ENCODE measurements at regions of chr11 and their contacts with region 1.

Region 1: DNA sequence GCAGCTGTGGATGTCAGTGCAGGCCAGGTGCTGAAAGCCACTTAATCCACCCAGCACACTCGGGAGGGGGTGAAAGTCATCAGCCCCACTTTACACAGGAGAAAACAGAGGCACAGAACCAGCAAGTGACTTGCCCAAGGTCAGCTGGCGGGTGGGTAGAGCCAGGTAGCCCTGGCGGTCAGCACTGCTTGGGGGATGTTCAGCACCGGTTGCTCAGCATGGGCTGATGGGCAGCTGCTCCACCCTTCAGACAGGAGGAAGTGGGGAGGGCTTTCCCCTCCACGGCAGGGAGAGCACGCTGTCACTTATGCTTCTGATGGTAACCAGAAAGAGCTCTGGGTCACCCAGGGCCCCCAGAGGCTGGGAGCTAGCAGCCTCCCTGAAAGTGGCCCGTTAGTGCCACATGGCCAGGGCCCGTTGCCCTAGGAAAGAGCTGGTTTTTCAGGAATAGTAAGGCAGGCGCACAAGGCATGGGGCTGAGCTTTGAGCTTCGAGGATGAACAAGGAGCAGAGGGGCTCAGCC is 417.9 kb downstream of the CTTN start:
- DNase-seq: peak; percentile 72
- H3K4me3 ChIP-seq: no peak overlapping the region
- H3K27ac ChIP-seq: no peak overlapping the region
- H3K4me1 ChIP-seq: peaks cover 0 to 2% of the 10 kb centered on the region in 2 experiments; a peak in 1 of 4 replicates
- H3K27me3 ChIP-seq: no peaks in the 10 kb centered on the region
- CTCF ChIP-seq: no peak
- EP300 ChIP-seq: no peak
- RAD21 ChIP-seq: no peak

Region 2: DNA sequence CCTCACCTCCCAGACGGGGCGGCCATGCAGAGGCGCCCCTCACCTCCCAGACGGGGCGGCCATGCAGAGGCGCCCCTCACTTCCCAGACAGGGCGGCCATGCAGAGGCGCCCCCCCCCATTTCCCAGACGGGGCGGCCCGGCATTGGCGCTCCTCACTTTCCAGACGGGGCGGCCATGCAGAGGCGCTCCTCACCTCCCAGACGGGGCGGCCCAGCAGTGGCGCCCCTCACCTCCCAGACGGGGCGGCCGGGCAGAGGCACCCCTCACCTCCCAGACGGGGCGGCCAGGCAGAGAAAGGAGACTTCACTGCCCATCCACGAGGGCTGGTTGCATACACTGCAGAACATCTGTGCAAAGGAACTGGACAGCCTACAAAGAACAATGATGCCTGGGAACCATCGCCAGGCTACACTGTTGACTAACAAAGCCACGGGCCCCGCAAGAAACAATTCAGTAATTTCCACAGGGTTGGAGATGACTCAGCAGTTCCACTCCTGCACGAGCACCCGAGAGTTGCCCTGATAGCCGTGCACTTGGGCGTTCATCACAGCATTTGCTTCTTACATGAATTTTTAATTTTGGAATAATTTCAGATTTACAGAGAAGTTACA is 359.2 kb before region 1 on chr11:
- CTCF ChIA-PET with region 1: no interaction called
- POLR2A ChIA-PET with region 1: no interaction called
- DNase-seq: no peak
- H3K4me3 ChIP-seq: no peak overlapping the region
- H3K27ac ChIP-seq: no peak overlapping the region
- H3K4me1 ChIP-seq: no peaks in the 10 kb centered on the region; a peak in 1 of 4 replicates
- H3K27me3 ChIP-seq: no peaks in the 10 kb centered on the region
- CTCF ChIP-seq: no peak
- EP300 ChIP-seq: no peak
- RAD21 ChIP-seq: no peak

Region 3: GRCh38 chr11:70503458-70504221 is 312.6 kb before region 1 on chr11:
- CTCF ChIA-PET with region 1: no interaction called
- POLR2A ChIA-PET with region 1: no interaction called
- DNase-seq: peak; percentile 63
- H3K4me3 ChIP-seq: no peak overlapping the region
- H3K27ac ChIP-seq: no peak overlapping the region
- H3K4me1 ChIP-seq: peaks cover 0 to 33% of the 10 kb centered on the region in 2 experiments; a peak in 1 of 4 replicates
- H3K27me3 ChIP-seq: no peaks in the 10 kb centered on the region
- CTCF ChIP-seq: no peak
- EP300 ChIP-seq: no peak
- RAD21 ChIP-seq: peak; percentile 28; the same call in 1 of the 2 replicates

Region 4: GRCh38 chr11:70804139-70804837 is 11.9 kb before region 1 on chr11:
- CTCF ChIA-PET with region 1: interaction called, 32 read pairs
- POLR2A ChIA-PET with region 1: no interaction called
- DNase-seq: no peak
- H3K4me3 ChIP-seq: no peak overlapping the region
- H3K27ac ChIP-seq: no peak overlapping the region
- H3K4me1 ChIP-seq: no peaks in the 10 kb centered on the region
- H3K27me3 ChIP-seq: no peaks in the 10 kb centered on the region
- CTCF ChIP-seq: no peak
- EP300 ChIP-seq: no peak
- RAD21 ChIP-seq: no peak

Region 5: GRCh38 chr11:70834277-70834940 is 18.2 kb after region 1 on chr11:
- CTCF ChIA-PET with region 1: interaction called, 34 read pairs
- POLR2A ChIA-PET with region 1: no interaction called
- DNase-seq: no peak
- H3K4me3 ChIP-seq: no peak overlapping the region
- H3K27ac ChIP-seq: no peak overlapping the region
- H3K4me1 ChIP-seq: no peaks in the 10 kb centered on the region
- H3K27me3 ChIP-seq: no peaks in the 10 kb centered on the region
- CTCF ChIP-seq: no peak
- EP300 ChIP-seq: no peak
- RAD21 ChIP-seq: no peak

Region 6: GRCh38 chr11:70861559-70861958 is 45.3 kb after region 1 on chr11:
- CTCF ChIA-PET with region 1: interaction called, 13 read pairs
- POLR2A ChIA-PET with region 1: no interaction called
- DNase-seq: no peak
- H3K4me3 ChIP-seq: no peak overlapping the region
- H3K27ac ChIP-seq: no peak overlapping the region
- H3K4me1 ChIP-seq: no peaks in the 10 kb centered on the region
- H3K27me3 ChIP-seq: no peaks in the 10 kb centered on the region
- CTCF ChIP-seq: no peak
- EP300 ChIP-seq: no peak
- RAD21 ChIP-seq: no peak

Region 7: GRCh38 chr11:71080239-71081097 is 264.3 kb after region 1 on chr11:
- CTCF ChIA-PET with region 1: interaction called, 29 read pairs
- POLR2A ChIA-PET with region 1: no interaction called
- DNase-seq: peak; percentile 86
- H3K4me3 ChIP-seq: no peak overlapping the region; a peak in 1 of 4 replicates
- H3K27ac ChIP-seq: no peak overlapping the region
- H3K4me1 ChIP-seq: no peaks in the 10 kb centered on the region
- H3K27me3 ChIP-seq: no peaks in the 10 kb centered on the region
- CTCF ChIP-seq: peak; percentile 39
- EP300 ChIP-seq: no peak
- RAD21 ChIP-seq: peak; percentile 86

Measured in SK-N-SH (cell line).